Activated CD8-positive, alpha-beta T cell treated with anti-CD3 and anti-CD28 coated beads for 36 hours (primary cell): ENCODE measurements at regions of chr1 and their contacts with region 1.

Region 1: DNA sequence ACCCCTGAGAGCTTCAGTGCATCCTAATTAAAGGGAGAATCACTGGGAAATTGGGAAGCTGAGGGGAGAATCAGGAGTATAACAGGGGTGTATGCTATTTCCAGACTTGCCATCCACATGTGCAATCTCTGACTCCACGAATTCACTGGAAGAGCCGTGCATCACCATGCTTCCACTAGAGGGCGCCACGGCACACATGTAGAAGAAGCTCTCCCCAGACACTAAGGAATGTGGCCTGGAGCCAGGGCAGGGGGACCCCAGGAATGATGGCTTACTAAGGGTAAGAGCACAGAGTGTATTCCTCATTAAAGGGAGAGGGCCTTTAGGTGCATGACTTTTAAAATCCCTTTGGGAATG is 81.5 kb downstream of the ABCA4 start:
- DNase-seq: peak; percentile 72
- ATAC-seq: no peak
- H3K4me3 Mint-ChIP-seq: no peak overlapping the region
- H3K27ac Mint-ChIP-seq: no peak overlapping the region
- H3K4me1 Mint-ChIP-seq: peaks cover 5% of the 10 kb centered on the region
- H3K27me3 Mint-ChIP-seq: peaks cover 27% of the 10 kb centered on the region
- CTCF ChIP-seq: peak; percentile 90

Region 2: DNA sequence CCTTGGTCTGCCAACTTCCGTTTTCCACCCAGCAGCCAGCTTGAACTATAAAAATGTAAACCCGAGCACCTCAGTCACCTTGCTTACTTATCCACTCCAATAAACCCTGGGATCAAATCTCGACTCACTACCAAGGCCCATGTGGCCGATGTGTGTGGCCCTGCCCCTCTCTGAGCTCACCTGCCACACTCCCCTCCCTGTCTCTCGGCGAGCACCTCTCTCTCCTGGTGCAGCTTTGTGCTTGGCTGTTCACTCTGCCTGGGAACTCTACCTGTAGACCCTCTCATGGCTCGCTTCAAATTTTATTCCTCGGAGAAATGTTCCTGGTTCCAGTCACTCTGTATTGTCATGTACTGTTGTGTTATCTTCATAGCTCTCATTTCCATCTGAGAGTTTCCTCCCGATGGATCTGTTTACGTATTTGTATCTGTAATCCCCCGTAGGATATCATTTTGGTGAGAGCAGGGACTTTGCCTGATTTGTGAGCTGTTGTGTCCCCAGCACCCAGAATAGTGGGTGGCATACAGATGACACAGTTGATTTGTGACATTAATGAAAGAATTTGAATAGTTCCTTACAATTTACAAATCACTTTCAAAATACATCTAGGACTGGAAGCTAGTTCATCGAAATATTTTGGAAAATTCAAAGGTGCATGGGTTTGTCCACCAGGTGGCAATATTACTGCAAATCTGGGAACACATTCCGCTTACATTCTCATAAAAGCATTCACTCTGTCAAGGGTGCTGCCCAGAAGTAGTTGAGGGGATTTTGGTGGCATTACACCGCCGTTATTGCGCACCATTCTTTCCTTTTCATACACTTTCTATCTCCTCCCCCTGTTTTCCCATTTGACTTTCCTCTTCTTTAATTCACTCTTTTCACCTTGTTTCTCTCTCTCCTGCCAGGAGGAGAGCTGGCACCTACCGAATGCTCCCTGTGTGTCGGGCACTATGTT is 13.8 kb before region 1 on chr1:
- CTCF ChIA-PET with region 1: interaction called, 61 read pairs
- POLR2A ChIA-PET with region 1: no interaction called
- intact Hi-C with region 1: no loop called
- DNase-seq: no peak
- ATAC-seq: no peak
- H3K4me3 Mint-ChIP-seq: no peak overlapping the region
- H3K27ac Mint-ChIP-seq: no peak overlapping the region
- H3K4me1 Mint-ChIP-seq: no peaks in the 10 kb centered on the region
- H3K27me3 Mint-ChIP-seq: no peaks in the 10 kb centered on the region
- CTCF ChIP-seq: peak; percentile 62

Region 3: DNA sequence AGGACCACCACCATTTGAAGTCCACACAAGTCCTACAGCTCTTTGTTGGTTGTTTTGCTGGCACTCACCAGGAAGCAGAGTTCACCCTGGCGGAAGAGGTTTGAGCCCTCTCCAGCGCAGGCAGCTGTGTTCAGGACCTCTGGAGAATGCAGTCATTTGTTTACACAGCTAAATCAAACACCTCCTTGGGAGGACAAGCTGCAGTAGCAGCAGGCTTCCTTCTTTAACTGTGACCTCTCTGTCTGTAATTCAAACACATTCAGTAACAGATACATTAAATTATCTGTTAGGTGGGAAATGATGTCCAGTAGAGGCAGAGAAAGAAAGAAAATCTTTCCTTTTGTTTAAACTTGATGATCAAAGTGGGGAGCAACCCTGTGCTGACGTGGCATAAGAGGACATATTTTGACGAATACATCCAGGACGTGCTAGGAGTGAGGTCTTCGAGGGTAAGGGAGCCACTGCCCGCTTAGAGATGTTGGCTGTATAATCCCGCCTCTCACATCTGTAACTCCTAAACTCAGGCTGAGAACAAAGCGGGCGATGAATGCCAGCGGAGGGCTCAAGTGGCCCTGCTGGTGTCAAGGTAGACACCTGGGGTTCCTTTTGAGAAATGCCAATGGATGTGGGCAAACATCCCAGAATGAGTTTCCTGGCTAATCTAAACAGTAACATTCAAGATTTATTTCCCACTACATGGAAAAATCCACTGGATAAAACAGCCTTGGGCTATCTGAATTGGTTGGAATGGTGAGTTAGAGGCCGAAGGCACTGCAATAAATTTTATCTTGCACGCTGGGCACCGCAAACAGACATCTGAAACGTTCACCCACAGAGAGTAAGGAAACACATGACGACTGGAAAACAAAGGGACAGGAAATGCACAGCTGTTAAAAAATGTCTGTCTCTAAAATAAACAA is 29.8 kb after region 1 on chr1:
- CTCF ChIA-PET with region 1: interaction called, 26 read pairs
- POLR2A ChIA-PET with region 1: no interaction called
- intact Hi-C with region 1: no loop called
- DNase-seq: no peak
- ATAC-seq: no peak
- H3K4me3 Mint-ChIP-seq: no peak overlapping the region
- H3K27ac Mint-ChIP-seq: no peak overlapping the region
- H3K4me1 Mint-ChIP-seq: peaks cover 12% of the 10 kb centered on the region
- H3K27me3 Mint-ChIP-seq: no peaks in the 10 kb centered on the region
- CTCF ChIP-seq: no peak

Region 4: GRCh38 chr1:94335950-94336349 is 296.5 kb after region 1 on chr1:
- CTCF ChIA-PET with region 1: interaction called, 37 read pairs
- POLR2A ChIA-PET with region 1: no interaction called
- intact Hi-C with region 1: no loop called
- DNase-seq: peak; percentile 51
- ATAC-seq: no peak
- H3K4me3 Mint-ChIP-seq: no peak overlapping the region
- H3K27ac Mint-ChIP-seq: no peak overlapping the region
- H3K4me1 Mint-ChIP-seq: no peaks in the 10 kb centered on the region
- H3K27me3 Mint-ChIP-seq: peaks cover 8% of the 10 kb centered on the region
- CTCF ChIP-seq: peak; percentile 69